Esophagus muscularis mucosa (tissue), 4 donors: ENCODE measurements at regions of chr14 and their contacts with region 1.

Region 1: DNA sequence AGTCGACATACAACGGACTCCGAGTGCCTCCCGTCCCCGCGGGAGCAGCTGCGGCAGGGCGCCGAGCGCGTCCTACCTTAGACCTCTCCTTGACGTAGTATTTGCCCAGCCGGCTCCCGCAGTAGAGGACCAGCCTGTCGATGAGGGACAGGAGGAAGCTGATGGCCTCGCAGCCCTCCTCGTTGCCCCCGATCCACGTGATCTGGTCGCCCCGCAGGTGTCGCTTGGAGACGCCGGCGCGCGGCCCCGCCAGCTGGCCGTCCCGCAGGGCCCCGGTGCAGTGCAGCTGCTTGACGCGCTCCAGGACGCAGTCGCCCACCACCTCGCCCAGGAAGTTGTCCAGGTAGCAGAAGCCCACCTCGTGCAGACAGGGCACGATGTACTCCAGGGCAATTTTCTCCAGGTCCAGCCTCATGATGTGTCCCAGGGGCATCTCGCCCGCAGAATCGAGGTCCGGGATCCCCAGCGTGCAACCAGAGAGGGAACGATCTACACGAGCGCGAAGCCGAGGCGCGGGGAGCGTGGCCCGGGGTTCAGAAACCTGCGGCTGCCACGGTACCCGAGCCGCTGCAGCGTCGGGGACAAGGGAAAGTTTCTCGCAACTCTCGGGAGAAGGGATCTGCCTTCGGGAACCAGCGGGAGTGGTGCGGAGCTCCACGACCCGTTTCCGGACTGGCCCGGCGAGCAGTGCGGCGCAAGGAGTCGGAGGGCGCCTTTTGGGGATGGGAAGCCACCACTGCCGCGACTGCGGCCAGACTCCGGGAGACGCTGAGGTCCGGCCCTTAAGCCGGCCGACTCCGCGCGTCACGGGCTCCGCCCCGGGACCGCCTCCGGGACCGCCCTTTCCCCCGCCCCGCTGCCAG is at the start of gene EGLN3:
- DNase-seq: peak; percentile 97
- H3K4me3 ChIP-seq: peak within 1 kb of the TSS; percentile 65 to 85 (median 76)
- H3K27ac ChIP-seq: peak within 1 kb of the TSS; percentile 77 to 89 (median 85)
- H3K4me1 ChIP-seq: peaks cover 9 to 63% (median 48%) of the 10 kb centered on the region in 4 donors
- H3K27me3 ChIP-seq: no peaks in the 10 kb centered on the region
- CTCF ChIP-seq: no peak
- EP300 ChIP-seq: no peak
- POLR2A ChIP-seq: peak; percentile 91
- total RNA-seq, gene EGLN3: 24.0 to 41.1 (median 24.5) TPM

Region 2: DNA sequence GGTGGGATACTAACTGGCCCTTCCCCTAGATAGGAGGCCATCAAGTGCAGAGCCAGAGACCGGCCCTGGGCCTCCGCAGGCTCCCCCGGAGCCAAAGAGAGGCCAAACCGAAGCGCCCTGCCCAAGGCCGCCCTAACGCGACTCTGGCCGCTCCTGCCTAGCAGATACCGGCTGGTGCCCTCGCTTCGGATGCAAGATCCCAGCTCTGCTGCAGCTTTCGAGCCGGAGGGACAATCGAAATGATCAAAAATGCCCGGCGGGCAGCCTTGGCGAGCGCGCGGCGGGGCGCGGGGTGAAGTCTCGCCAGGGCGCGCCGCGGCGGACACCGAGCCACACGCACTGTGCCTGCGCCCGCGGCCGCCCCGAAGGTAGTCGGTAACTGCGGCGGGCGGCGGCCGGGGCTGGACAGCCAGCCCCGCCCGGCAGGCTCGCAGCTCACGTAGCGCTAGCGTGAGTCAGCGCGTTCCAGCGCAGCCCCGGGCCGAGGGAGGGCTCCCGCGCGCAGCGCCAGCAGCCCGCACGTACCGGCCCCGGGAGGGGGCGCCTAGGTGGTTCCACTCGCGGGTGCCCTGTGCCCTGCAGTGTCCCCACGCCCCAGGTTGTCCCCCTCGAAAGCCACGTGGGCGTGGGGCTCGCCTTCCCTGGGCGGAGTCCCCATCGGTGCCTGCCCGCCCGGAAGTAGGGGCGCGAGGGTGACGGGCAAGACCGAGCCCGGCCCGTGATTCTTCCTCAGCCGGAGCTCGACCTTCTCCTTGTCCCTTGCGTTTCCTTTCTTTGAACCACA is 109.5 kb after region 1 on chr14:
- intact Hi-C with region 1: loop called (anchors 5 kb)
- DNase-seq: peak; percentile 91
- H3K4me3 ChIP-seq: peak overlapping the region; percentile 60 to 78 (median 64)
- H3K27ac ChIP-seq: peak overlapping the region; percentile 89 to 91 (median 91)
- H3K4me1 ChIP-seq: peaks cover 19 to 32% (median 28%) of the 10 kb centered on the region in 4 donors
- H3K27me3 ChIP-seq: no peaks in the 10 kb centered on the region
- CTCF ChIP-seq: peak; percentile 33 to 37 (median 35)
- EP300 ChIP-seq: no peak
- POLR2A ChIP-seq: peak; percentile 39